ENCODE measurements at regions of chrX and their contacts with region 1.

Region 1: DNA sequence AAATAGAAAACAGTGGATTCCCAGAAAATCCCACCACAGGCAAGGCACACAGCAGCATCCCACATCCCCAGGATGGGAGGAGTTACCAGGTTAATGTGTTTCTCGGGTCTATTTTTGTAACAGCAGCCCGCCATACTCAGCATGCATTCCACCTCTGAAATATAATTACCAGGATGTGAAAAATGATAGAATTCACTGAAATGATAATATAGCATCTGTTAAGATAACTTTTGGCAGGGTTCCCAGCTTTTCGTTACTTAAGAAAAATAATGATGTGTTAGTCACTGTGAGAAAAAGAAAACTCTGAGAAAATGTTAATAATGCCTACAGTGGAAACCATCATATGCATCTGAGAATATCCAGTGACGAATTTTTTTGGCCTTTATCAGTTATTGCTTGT is 87.1 kb downstream of the VCX2 start:
- DNase-seq: no peak

Region 2: DNA sequence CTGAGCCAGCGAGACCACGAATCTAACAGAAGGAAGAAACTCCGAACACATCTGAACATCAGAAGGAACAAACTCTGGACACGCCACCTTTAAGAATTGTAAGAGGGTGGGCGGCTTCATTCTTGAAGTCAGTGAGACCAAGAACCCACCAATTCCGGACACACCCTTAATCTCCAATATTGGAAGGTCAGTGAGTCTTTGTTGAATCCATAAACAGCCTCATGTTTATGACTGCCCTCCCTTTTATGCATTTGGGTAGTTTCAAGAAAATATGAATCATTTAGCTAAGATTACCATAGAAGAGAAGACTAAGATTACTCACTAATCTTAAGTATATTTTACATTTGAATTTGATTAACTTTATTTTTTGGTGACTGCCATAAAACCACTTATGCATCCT is 38.5 kb after region 1 on chrX:
- intact Hi-C with region 1: loop called in 1 of 2 experiments (anchors 2 kb)
- DNase-seq: no peak

Measured in posterior vena cava (tissue), 2 donors.